Activated naive CD4-positive, alpha-beta T cell treated with anti-CD3 and anti-CD28 coated beads for 36 hours (primary cell): ENCODE measurements at regions of chr11 and their contacts with region 1.

Region 1: DNA sequence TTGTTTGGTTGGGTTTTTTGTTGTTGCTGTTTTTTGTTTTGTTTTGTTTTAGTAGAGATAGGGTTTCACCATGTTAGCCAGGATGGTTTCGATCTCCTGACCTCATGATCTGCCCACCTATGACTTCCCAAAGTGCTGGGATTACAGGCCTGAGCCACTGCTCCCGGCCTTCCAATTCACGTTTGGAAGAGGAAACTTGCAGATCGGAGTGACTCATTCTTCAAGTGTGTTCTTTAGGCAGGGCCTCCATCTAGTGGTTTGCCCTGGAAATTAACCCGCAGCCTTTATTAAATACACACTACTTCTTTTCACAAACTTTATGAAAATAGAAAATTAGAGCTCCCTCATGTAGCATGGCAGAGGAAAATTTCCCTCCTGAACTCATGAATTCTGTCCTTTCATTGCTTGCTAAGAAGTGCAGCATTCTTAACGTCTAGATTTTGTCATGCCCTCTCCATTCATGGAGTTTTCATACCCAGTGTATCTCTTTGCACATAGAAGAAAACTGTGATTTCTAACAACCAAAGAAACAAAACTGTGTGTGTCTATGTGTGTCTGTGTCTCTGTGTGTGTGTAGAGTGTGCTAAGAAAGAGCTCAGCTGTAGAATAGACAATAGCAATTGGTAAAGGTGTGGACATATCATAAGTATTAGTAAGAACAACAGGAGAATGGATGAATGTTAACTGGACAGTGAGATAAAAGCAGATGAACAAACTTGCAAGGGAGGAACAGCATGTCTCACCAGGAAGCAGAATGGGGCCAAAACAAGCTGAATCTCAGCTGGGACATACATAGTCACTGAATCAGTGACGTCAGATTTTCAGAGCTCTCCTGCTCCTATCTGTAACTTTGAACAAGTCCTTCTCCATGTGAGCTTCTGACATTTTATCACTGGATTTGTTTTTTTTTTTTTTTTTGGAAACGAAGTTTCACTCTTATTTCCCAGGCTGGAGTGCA is 118.4 kb downstream of the BBOX1 start:
- DNase-seq: peak; percentile 45
- H3K4me3 Mint-ChIP-seq: no peak overlapping the region
- H3K27ac Mint-ChIP-seq: no peak overlapping the region
- H3K4me1 Mint-ChIP-seq: no peaks in the 10 kb centered on the region
- H3K27me3 Mint-ChIP-seq: peaks cover 7% of the 10 kb centered on the region

Region 2: GRCh38 chr11:26286472-26287066 is 872.4 kb before region 1 on chr11:
- CTCF ChIA-PET with region 1: no interaction called
- intact Hi-C with region 1: loop called (anchors 1 kb)
- DNase-seq: no peak
- H3K4me3 Mint-ChIP-seq: no peak overlapping the region
- H3K27ac Mint-ChIP-seq: no peak overlapping the region
- H3K4me1 Mint-ChIP-seq: peaks cover 2% of the 10 kb centered on the region
- H3K27me3 Mint-ChIP-seq: peaks cover 12% of the 10 kb centered on the region

Region 3: DNA sequence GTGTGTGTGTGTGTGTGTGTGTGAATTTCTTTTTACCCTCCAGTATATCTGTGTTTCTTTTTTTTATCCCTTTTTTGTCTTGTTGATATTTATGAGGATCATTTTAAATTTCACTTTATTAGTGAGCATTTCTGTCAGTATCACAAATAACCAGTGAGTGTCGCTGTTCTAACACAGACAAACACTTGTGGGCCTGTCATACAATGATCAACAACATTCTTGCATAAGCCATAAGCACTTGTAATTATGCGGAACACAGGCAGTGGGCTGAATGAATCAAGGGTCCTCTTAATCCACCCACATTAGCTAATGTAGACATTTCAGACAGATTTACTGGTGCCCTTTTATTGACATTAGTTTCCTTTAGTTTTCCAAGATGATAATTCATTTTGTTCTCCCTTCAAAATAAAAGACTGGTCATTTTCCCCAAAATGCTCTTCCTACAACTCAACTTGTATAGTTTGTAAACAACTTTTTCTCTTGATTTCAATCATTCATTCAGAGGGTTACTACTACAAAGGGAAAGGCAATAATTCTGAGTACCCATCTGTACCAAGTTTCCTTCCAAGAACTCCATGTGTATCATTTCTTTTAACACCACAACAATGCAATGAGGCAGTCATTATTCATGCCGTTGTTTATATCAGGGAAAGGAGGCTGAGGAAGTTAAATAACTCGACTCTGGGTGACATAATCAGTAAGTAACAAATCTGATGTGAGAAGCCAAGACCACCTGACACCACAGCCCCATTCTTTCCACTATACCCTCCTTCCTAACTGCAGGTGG is 861.6 kb before region 1 on chr11:
- CTCF ChIA-PET with region 1: interaction called, 5 read pairs
- intact Hi-C with region 1: loop called (anchors 1 kb)
- DNase-seq: no peak
- H3K4me3 Mint-ChIP-seq: no peak overlapping the region
- H3K27ac Mint-ChIP-seq: no peak overlapping the region
- H3K4me1 Mint-ChIP-seq: no peaks in the 10 kb centered on the region
- H3K27me3 Mint-ChIP-seq: no peaks in the 10 kb centered on the region

Region 4: GRCh38 chr11:26753723-26754504 is 405.1 kb before region 1 on chr11:
- CTCF ChIA-PET with region 1: no interaction called
- intact Hi-C with region 1: loop called (anchors 1 kb)
- DNase-seq: peak; percentile 17
- H3K4me3 Mint-ChIP-seq: no peak overlapping the region
- H3K27ac Mint-ChIP-seq: no peak overlapping the region
- H3K4me1 Mint-ChIP-seq: no peaks in the 10 kb centered on the region
- H3K27me3 Mint-ChIP-seq: no peaks in the 10 kb centered on the region

Region 5: DNA sequence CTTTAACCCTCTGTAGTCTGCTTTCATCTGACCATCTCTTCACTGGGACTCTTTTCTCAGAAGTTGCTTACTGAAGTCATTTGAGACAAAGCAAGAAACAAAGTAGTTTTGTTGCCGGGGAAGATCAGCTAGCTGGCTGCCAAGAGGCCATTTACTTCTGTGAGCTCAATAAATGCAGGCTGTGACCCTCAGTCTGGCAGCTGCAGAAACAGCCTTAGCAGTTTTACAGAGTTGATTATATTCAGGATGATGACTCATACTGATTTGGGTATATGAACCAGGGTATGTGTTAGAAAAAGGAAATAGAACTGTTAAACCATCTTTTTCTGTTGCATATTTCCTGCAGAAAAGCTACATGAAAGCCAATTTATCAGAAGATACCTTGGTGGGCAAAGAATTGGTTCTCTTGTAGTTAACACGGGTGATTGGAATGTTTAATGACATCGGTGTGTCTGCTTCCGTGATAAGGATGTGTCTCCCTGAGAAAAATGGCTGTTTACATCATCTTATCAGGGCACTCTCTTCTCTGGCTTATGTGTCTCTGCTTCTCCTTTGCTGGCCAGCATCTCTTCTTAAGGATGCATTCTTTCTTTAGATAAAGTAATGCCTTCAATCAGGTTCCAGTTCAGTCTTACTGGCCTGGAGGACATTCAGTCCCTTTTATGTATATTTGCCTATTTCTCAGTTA is 146.6 kb before region 1 on chr11:
- CTCF ChIA-PET with region 1: no interaction called
- intact Hi-C with region 1: loop called (anchors 10 kb)
- DNase-seq: no peak
- H3K4me3 Mint-ChIP-seq: no peak overlapping the region
- H3K27ac Mint-ChIP-seq: no peak overlapping the region
- H3K4me1 Mint-ChIP-seq: no peaks in the 10 kb centered on the region
- H3K27me3 Mint-ChIP-seq: no peaks in the 10 kb centered on the region